ENCODE measurements at regions of chr10 and their contacts with region 1.

Region 1: DNA sequence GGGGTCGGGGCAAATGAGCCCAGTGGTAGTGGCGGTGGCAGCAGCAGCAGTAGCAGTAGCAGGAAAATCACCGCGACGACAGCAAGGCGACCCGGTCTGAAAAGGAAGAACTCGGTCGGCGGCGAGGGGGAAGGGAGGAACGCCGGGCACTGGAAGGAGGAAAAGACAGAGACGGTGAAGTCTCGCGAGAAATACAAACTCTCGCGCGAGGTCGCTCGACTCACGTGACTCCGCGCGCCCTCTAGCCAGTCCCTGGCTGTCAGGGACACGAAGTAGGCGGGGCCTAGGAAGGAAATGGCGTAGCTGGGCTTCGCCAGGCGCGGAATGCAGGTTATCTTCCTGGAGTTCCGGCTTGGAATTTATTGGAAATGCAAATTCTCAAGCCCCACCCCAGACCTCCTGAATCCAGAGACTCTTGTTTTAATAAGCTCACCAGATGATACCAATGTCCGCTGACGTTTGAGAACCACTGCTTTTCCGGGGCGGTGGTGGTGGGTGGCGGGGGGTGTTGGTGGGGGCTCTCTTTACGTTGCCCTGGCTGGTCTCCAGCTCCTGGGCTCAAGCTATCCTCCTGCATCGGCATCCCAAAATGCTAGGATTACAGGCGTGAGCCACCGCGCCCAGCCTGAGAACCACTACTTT is at the start of gene SMNDC1:
- DNase-seq: peak; percentile 94 to 95
- H3K4me3 ChIP-seq: peak within 1 kb of the TSS; percentile 69
- H3K27ac ChIP-seq: peak within 1 kb of the TSS; percentile 89
- H3K4me1 ChIP-seq: peaks cover 38% of the 10 kb centered on the region
- H3K27me3 ChIP-seq: no peaks in the 10 kb centered on the region
- CTCF ChIP-seq: no peak
- total RNA-seq, gene SMNDC1: 23.1 and 26.9 TPM in 2 replicates

Region 2: DNA sequence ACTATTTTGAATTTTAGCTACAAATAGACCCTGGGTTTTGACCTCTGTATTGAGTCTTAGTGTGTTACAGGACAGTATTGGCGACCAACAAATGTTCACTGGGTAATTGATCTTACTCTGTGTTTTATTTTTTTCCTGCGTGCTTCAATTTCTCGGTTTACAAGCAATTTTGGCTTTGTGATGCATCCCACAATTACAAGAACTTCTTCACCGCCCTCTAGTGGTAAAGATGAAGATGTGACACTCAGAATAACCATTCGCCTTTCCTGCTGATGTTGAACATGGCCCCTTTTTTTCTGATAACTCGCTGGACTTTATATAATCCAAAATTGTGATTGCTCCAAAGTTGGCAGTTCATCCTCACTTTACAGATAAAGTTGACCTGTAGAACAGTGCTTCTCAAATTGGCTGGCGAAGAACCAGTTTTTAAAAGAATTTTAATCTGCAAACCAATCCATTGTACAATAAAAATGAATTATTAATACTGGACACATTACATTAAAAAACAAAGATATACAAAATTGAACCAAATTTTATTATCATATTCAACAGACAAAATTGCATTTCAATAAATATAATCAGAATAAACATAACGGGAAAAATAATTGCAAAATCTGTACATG is 242.3 kb after region 1 on chr10:
- CTCF ChIA-PET with region 1: interaction called, 3 read pairs
- POLR2A ChIA-PET with region 1: interaction called, 16 read pairs
- intact Hi-C with region 1: no loop called
- DNase-seq: no peak
- H3K4me3 ChIP-seq: no peak overlapping the region
- H3K27ac ChIP-seq: no peak overlapping the region
- H3K4me1 ChIP-seq: no peaks in the 10 kb centered on the region
- H3K27me3 ChIP-seq: no peaks in the 10 kb centered on the region
- CTCF ChIP-seq: peak; percentile 83

Region 3: DNA sequence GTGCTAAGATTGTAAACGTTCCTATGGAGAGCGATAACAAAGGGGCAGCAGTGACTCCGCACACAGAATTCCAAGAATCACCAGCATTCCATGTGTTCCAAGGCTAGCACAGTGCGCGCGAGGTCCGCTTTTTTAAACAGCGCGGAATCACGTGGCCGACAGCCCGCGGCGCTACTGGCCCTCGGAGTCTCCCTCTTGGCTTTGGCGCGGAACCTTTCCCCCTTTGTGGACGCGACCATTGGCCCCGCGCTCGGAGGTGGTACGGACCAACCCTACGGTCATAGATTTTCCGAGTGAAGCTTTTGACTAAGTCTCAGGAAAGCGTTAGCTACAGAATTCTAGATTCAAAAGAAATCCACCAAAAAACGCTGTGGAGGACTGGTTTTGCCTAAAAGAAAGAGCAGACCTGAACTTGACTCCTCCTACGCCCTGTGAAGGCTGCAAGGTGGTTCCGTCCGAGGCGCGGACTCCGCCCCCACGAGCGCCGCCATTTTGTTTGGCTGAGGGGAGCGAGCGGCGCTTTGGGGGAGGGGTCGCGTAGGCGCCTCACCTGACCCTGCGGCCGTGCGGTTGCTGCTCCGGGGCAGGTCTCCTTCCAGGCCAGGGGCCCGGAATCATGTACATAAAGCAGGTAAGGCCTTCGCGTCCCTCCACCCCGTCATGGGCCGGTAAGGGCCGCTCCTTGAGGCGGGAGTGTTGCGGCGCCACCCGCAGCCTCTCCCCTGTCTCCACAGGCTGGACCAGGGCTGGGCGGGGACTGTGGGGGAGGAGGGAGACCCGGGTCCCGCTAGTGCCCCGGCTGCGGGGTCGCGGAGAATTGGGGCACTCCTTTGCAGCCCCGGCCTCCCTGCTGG is 262.5 kb after region 1 on chr10 and contains the start of gene SMC3:
- CTCF ChIA-PET with region 1: no interaction called
- POLR2A ChIA-PET with region 1: no interaction called
- intact Hi-C with region 1: loop called (anchors 1 kb)
- DNase-seq: peak; percentile 74 to 82
- H3K4me3 ChIP-seq: peak within 1 kb of the TSS; percentile 90
- H3K27ac ChIP-seq: peak within 1 kb of the TSS; percentile 86
- H3K4me1 ChIP-seq: peaks cover 7% of the 10 kb centered on the region
- H3K27me3 ChIP-seq: no peaks in the 10 kb centered on the region
- CTCF ChIP-seq: no peak
- total RNA-seq, gene SMC3: 22.1 and 31.2 TPM in 2 replicates

Region 4: GRCh38 chr10:110600487-110601101 is 295.7 kb after region 1 on chr10:
- CTCF ChIA-PET with region 1: interaction called, 4 read pairs
- POLR2A ChIA-PET with region 1: no interaction called
- intact Hi-C with region 1: loop called (anchors 1 kb)
- DNase-seq: peak; percentile 15 to 39
- H3K4me3 ChIP-seq: no peak overlapping the region
- H3K27ac ChIP-seq: no peak overlapping the region
- H3K4me1 ChIP-seq: no peaks in the 10 kb centered on the region
- H3K27me3 ChIP-seq: no peaks in the 10 kb centered on the region
- CTCF ChIP-seq: peak; percentile 66

Region 5: DNA sequence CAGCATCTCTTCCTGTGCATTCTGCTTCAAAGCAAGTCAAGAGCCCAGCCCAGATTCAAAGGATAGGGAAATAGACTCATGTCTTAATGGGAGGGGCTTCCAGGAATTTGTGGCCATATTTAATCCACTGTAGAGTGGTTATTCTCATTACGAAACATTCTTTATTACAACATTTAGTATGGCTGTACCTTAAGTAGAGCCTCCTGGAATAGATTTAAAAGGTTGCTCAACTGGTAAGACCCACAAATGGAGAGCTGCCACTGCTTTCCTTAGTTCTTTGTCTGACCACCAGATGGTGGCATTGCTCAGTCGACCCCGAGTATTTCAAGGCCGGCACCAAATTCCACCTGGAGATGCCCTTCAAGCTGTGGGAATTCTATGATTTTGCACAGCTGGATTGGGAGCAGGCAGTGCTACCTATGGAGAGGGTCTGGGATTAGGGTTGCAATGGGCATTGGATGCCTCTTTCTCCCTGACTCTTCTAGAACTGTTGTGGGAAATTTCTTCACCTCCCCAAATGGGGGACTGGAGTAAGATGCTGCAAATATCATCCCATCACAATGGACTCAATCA is 441.4 kb after region 1 on chr10:
- CTCF ChIA-PET with region 1: no interaction called
- POLR2A ChIA-PET with region 1: no interaction called
- intact Hi-C with region 1: loop called (anchors 10 kb)
- DNase-seq: peak; percentile 58 to 68
- H3K4me3 ChIP-seq: no peak overlapping the region
- H3K27ac ChIP-seq: no peak overlapping the region
- H3K4me1 ChIP-seq: no peaks in the 10 kb centered on the region
- H3K27me3 ChIP-seq: no peaks in the 10 kb centered on the region
- CTCF ChIP-seq: peak; percentile 83

Region 6: GRCh38 chr10:110893559-110894179 is 588.8 kb after region 1 on chr10:
- CTCF ChIA-PET with region 1: no interaction called
- POLR2A ChIA-PET with region 1: no interaction called
- intact Hi-C with region 1: loop called (anchors 5 kb)
- DNase-seq: no peak
- H3K4me3 ChIP-seq: no peak overlapping the region
- H3K27ac ChIP-seq: no peak overlapping the region
- H3K4me1 ChIP-seq: no peaks in the 10 kb centered on the region
- H3K27me3 ChIP-seq: no peaks in the 10 kb centered on the region
- CTCF ChIP-seq: peak; percentile 65

Region 7: DNA sequence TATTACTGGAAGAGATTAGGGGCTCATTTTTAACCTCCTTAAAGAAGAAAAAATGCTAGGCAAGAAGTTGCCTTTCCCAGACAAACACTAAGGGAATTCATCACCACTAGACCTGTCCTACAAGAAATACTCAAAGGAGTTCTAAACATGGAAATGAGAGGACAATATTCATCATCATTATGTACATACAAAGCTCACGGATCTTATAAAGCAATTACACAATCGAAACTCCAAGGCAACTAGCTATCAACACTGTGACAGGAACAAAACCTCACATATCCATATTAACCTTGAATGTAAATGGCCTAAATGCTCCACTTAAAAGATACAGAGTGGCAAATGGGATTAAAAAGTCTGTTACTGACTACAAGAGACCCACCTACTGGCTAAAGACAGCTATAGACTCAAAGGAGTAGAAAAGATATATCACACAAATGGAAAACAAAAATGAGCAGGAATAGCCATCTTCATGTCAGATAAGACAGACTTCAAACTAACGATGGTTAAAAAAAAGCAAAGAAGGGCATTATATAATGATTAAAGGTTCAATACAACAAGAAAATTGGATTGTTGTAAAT is 1018.6 kb after region 1 on chr10:
- CTCF ChIA-PET with region 1: no interaction called
- POLR2A ChIA-PET with region 1: no interaction called
- intact Hi-C with region 1: loop called (anchors 5 kb)
- DNase-seq: no peak
- H3K4me3 ChIP-seq: no peak overlapping the region
- H3K27ac ChIP-seq: no peak overlapping the region
- H3K4me1 ChIP-seq: no peaks in the 10 kb centered on the region
- H3K27me3 ChIP-seq: no peaks in the 10 kb centered on the region
- CTCF ChIP-seq: no peak; the same call in 1 of the 2 replicates

Measured in PC-9 (cell line).